Endothelial cell of umbilical vein (primary cell): ENCODE measurements at regions of chr19 and their contacts with region 1.

Region 1: GRCh38 chr19:58097781-58098681 is at the start of gene ZSCAN18:
- DNase-seq: peak; percentile 93
- H3K4me3 ChIP-seq: peak within 1 kb of the TSS; percentile 38 to 72 (median 43)
- H3K27ac ChIP-seq: peak within 1 kb of the TSS; percentile 70
- H3K4me1 ChIP-seq: no peaks in the 10 kb centered on the region
- H3K27me3 ChIP-seq: no peaks in the 10 kb centered on the region
- CTCF ChIP-seq: no peak
- POLR2A ChIP-seq: no peak
- total RNA-seq, gene ZSCAN18: 9.4 and 15.8 TPM in 2 replicates

Region 2: GRCh38 chr19:57947208-57948134 is 150.6 kb before region 1 on chr19 and contains the start of gene ZNF256:
- CTCF ChIA-PET with region 1: no interaction called
- POLR2A ChIA-PET with region 1: no interaction called
- dilution Hi-C with region 1: no loop called
- intact Hi-C with region 1: no loop called
- DNase-seq: peak; percentile 92
- H3K4me3 ChIP-seq: peak within 1 kb of the TSS; percentile 24 to 66 (median 53)
- H3K27ac ChIP-seq: no peak within 1 kb of the TSS
- H3K4me1 ChIP-seq: peaks cover 5% of the 10 kb centered on the region
- H3K27me3 ChIP-seq: no peaks in the 10 kb centered on the region
- CTCF ChIP-seq: peak; percentile 55 to 65
- POLR2A ChIP-seq: peak; percentile 50
- total RNA-seq, gene ZNF256: 3.7 and 4.0 TPM in 2 replicates

Region 3: GRCh38 chr19:58117841-58118575 is 20.0 kb after region 1 on chr19:
- CTCF ChIA-PET with region 1: no interaction called
- POLR2A ChIA-PET with region 1: interaction called, 11 read pairs
- dilution Hi-C with region 1: no loop called
- intact Hi-C with region 1: no loop called
- DNase-seq: no peak
- H3K4me3 ChIP-seq: no peak overlapping the region
- H3K27ac ChIP-seq: no peak overlapping the region
- H3K4me1 ChIP-seq: no peaks in the 10 kb centered on the region
- H3K27me3 ChIP-seq: no peaks in the 10 kb centered on the region
- CTCF ChIP-seq: no peak
- POLR2A ChIP-seq: no peak